GM13976 (cell line): ENCODE measurements at regions of chr19 and their contacts with region 1.

Region 1: DNA sequence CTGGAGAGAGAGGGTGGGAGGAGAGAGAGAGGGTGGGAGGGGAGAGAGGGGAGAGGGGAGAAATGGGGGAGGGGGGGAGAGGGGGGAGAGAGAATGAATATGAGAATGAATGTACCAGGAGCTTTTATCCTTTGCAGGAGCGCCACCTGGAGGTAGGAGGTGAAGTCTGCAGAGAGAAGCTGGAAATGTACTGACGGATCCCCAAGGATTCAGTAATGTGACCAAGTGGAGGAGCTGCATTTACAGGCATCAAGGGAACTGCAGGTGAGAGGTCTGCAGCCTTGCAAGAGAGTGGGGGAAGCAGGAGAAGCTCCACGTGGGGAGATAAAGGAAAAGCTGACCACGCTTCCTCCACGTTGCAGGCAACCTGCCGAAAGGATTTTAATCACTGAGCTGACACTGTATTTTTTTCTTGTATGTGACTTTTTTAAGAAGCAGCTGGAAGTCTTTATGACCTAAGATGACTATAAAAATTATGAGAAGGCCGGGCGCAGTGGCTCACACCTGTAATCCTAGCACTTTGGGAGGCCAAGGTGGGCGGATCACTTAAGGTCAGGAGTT is 33.7 kb downstream of the VSTM1 start:
- DNase-seq: peak; percentile 54
- CTCF ChIP-seq: peak; percentile 65

Region 2: GRCh38 chr19:53849237-53849676 is 180.8 kb before region 1 on chr19:
- in situ Hi-C with region 1: loop called (anchors 10 kb)
- DNase-seq: no peak
- CTCF ChIP-seq: no peak